Testis (tissue), 5 donors: ENCODE measurements at regions of chr1 and their contacts with region 1.

Region 1: DNA sequence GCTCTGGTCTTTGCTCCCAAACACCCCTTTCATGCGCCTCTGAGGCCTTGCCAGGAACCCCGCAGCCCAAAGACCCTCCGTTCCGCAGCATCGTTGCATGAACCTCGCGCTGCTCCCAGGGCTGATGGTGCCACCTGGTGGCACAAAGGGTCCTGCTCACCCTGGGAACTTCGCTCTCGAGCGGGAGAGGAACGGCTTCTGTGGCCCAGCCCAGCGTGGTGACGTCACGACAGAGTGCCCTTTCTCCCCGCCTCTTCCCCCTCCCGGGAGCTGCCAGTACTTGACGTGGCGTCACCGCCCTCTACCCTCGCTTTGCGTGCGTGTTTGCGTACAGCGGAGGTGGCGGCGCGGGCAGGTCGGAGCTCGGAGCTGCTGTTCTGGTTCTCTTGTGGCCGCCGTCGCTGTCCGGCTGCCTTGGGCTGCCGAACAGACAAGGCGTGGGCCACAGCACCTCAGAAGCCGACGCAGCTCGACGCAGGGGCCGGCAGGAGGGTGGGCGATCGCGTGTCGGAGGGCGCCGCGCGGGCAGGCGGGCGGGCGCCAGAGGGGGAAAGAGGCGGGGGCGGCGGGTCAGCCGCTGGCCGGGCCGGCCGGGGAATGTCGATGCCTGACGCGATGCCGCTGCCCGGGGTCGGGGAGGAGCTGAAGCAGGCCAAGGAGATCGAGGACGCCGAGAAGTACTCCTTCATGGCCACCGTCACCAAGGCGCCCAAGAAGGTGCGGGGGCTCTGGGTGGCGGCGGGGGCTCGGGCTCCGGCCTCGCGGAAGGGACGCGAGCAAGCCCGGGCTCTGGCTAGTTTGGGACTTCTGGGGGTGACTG is at the start of gene AHCYL1:
- DNase-seq: peak; percentile 100
- H3K4me3 ChIP-seq: peak within 1 kb of the TSS; percentile 76 to 96
- H3K27ac ChIP-seq: peak within 1 kb of the TSS; percentile 93 to 98
- H3K4me1 ChIP-seq: peaks cover 29% of the 10 kb centered on the region
- H3K27me3 ChIP-seq: no peaks in the 10 kb centered on the region
- CTCF ChIP-seq: peak; percentile 95 to 100 (median 99)
- POLR2A ChIP-seq: peak; percentile 93
- total RNA-seq, gene AHCYL1: 48.5 to 59.1 TPM

Region 2: DNA sequence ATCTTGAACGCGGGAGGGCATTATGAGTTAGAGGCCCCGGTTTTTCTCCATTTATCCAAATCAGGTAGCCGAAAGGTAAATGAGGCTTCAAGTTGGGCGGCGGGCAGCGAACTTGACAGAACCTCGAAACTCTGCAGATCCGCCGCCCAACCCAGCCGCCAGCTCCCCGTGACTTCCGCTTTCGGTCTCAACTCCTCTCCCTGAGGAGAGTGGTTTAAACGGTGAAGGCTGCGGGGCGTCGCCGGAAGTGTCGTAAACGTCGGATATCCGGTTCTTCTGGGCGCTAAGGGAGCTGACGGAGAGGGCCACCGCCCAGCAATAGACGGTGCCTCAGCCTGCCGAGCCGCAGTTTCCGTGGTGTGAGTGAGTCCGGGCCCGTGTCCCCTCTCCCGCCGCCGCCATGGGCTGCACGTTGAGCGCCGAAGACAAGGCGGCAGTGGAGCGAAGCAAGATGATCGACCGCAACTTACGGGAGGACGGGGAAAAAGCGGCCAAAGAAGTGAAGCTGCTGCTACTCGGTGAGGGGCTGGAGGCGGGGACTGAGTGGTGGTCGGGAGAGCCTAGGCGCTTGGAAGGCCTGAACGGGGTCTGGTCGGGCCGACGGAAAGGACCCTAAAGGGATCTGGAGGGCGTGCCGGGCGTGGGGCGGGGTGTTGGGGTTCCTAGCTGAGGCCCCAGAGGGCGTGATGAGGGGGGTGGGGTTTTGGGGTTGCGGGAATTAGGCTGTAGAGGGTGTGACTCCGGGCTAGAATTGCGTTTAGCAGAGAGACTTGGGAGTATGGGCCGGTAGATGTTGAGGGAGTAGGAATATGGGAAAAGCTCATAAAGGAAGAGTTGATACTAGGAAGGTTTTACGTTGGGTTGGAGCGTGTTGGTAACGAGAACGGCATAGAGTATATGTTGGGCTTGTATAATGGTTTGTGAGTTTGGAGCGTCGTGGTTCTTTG is 436.1 kb before region 1 on chr1 and contains the start of gene GNAI3:
- intact Hi-C with region 1: loop called (anchors 10 kb)
- DNase-seq: peak; percentile 98
- H3K4me3 ChIP-seq: peak within 1 kb of the TSS; percentile 75 to 81
- H3K27ac ChIP-seq: peak within 1 kb of the TSS; percentile 84 to 94
- H3K4me1 ChIP-seq: peaks cover 16% of the 10 kb centered on the region
- H3K27me3 ChIP-seq: no peaks in the 10 kb centered on the region
- CTCF ChIP-seq: peak in 1 of 3 experiments; percentile 18
- POLR2A ChIP-seq: peak; percentile 98
- total RNA-seq, gene GNAI3: 5.8 to 5.9 TPM

Region 3: DNA sequence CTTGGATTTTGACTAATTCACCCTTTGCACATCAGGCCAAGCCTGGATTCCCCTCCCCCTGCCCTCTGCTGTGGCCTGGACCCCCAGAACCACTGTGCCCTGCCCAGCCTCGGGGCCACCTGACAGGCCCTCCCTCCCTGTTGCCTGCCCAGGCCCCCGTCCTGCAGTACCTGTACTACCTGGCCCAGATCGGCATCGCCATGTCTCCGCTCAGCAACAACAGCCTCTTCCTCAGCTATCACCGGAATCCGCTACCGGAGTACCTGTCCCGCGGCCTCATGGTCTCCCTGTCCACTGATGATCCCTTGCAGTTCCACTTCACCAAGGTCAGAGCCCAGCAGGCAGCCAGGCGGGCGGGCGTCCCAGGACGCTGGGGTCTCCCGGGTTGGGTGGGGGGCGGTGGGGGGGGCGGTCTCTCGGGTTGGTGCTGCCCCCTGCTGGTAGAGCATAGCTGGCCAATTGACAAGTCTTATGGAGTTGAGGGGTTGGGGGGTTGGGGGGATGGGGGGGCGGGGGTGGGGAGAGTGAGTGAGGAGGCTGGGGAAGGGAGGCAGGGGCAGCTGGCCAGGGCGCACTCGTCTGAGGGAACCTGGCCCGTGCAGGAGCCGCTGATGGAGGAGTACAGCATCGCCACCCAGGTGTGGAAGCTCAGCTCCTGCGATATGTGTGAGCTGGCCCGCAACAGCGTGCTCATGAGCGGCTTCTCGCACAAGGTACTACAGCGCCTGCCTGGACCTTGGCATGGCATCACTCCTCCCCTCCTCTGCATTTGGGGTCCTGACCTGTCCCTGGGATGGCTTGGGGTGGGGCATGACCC is 354.4 kb before region 1 on chr1:
- intact Hi-C with region 1: loop called (anchors 10 kb)
- DNase-seq: peak; percentile 59
- H3K4me3 ChIP-seq: peak overlapping the region in 1 of 2 donors; percentile 10
- H3K27ac ChIP-seq: no peak overlapping the region
- H3K4me1 ChIP-seq: peaks cover 18% of the 10 kb centered on the region
- H3K27me3 ChIP-seq: no peaks in the 10 kb centered on the region
- CTCF ChIP-seq: peak in 1 of 3 experiments; percentile 51
- POLR2A ChIP-seq: no peak

Region 4: GRCh38 chr1:109773146-109773899 is 211.3 kb before region 1 on chr1:
- intact Hi-C with region 1: loop called (anchors 2 kb)
- DNase-seq: peak; percentile 92
- H3K4me3 ChIP-seq: no peak overlapping the region
- H3K27ac ChIP-seq: no peak overlapping the region
- H3K4me1 ChIP-seq: peaks cover 25% of the 10 kb centered on the region
- H3K27me3 ChIP-seq: no peaks in the 10 kb centered on the region
- CTCF ChIP-seq: peak; percentile 80 to 93 (median 89)
- POLR2A ChIP-seq: no peak

Region 5: GRCh38 chr1:109790735-109791494 is 193.8 kb before region 1 on chr1:
- intact Hi-C with region 1: loop called (anchors 5 kb)
- DNase-seq: no peak
- H3K4me3 ChIP-seq: no peak overlapping the region
- H3K27ac ChIP-seq: no peak overlapping the region
- H3K4me1 ChIP-seq: peaks cover 21% of the 10 kb centered on the region
- H3K27me3 ChIP-seq: no peaks in the 10 kb centered on the region
- CTCF ChIP-seq: no peak
- POLR2A ChIP-seq: no peak

Region 6: DNA sequence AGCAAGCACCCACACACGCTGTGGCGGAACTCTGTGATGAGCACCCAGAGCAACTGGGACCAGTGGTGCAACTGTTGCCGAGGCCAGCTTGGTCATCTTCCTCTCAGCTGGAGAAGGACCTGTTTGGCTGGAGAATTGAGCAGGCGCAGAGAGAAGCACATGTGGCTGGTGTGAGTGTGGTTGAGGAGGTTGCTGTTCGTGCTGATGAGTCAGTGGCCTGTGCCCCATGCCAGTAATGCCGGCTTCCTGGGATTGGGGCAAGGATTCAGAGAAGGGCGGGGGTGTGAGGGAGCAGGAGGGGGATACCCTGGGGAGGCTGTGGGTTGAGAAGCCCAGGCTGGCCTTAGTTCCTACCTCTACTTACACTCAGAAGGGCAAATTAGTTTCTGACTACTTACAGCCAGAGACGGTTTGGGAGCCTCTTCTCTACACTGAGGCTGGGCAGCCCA is 163.4 kb before region 1 on chr1:
- intact Hi-C with region 1: no loop called
- DNase-seq: no peak
- H3K4me3 ChIP-seq: no peak overlapping the region
- H3K27ac ChIP-seq: no peak overlapping the region
- H3K4me1 ChIP-seq: peaks cover 25% of the 10 kb centered on the region
- H3K27me3 ChIP-seq: no peaks in the 10 kb centered on the region
- CTCF ChIP-seq: no peak
- POLR2A ChIP-seq: no peak

Region 7: GRCh38 chr1:110087812-110088738 is 103.4 kb after region 1 on chr1:
- intact Hi-C with region 1: no loop called
- DNase-seq: peak; percentile 68
- H3K4me3 ChIP-seq: no peak overlapping the region
- H3K27ac ChIP-seq: no peak overlapping the region
- H3K4me1 ChIP-seq: peaks cover 19% of the 10 kb centered on the region
- H3K27me3 ChIP-seq: no peaks in the 10 kb centered on the region
- CTCF ChIP-seq: peak; percentile 37 to 75 (median 68)
- POLR2A ChIP-seq: no peak